ENCODE measurements at regions of chr9 and their contacts with region 1.

Region 1: GRCh38 chr9:132575005-132575609 is 7.3 kb upstream of the BARHL1 start:
- DNase-seq: peak in 3 of 4 donors; percentile 37 to 78 (median 60)
- ATAC-seq: peak; percentile 97
- H3K4me3 ChIP-seq: no peak overlapping the region
- H3K27ac ChIP-seq: no peak overlapping the region
- H3K4me1 ChIP-seq: no peaks in the 10 kb centered on the region
- H3K27me3 ChIP-seq: peaks cover 35 to 85% of the 10 kb centered on the region in 2 donors
- CTCF ChIP-seq: peak; percentile 49 to 54

Region 2: DNA sequence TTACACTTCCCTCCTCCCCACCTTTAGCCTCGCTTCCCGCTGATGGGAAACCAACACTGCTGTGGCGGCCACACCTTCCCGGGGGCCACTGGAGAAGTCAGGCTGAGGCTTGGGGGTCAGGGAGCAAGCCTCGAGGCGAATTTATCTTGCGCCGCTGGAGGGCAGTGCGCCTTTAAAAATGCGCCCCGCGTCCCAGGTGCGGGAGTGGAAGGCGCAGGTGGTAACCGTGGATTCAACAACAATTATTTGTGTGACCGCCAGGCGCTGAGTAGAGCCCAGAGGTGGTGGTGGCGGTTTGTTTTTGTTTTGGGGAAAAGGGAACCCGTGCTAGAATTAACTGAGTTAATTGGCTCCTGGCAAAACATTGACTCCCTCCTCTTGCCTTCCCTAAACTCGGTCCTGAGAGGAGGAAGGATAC is 164.0 kb before region 1 on chr9:
- intact Hi-C with region 1: loop called in 1 of 2 experiments (anchors 10 kb)
- DNase-seq: peak in 2 of 4 donors; percentile 42 to 81
- ATAC-seq: peak; percentile 72
- H3K4me3 ChIP-seq: peak overlapping the region in 1 of 2 donors; percentile 41
- H3K27ac ChIP-seq: no peak overlapping the region
- H3K4me1 ChIP-seq: peaks cover 10 to 28% of the 10 kb centered on the region in 2 donors
- H3K27me3 ChIP-seq: peaks cover 40 to 75% of the 10 kb centered on the region in 2 donors
- CTCF ChIP-seq: peak; percentile 39 to 41

Region 3: GRCh38 chr9:132509928-132510874 is 64.9 kb before region 1 on chr9:
- intact Hi-C with region 1: loop called in 1 of 2 experiments (anchors 5 kb)
- DNase-seq: no peak
- ATAC-seq: no peak
- H3K4me3 ChIP-seq: no peak overlapping the region
- H3K27ac ChIP-seq: no peak overlapping the region
- H3K4me1 ChIP-seq: peaks cover 0 to 15% of the 10 kb centered on the region in 2 donors
- H3K27me3 ChIP-seq: peaks cover 0 to 85% of the 10 kb centered on the region in 2 donors
- CTCF ChIP-seq: no peak

Region 4: DNA sequence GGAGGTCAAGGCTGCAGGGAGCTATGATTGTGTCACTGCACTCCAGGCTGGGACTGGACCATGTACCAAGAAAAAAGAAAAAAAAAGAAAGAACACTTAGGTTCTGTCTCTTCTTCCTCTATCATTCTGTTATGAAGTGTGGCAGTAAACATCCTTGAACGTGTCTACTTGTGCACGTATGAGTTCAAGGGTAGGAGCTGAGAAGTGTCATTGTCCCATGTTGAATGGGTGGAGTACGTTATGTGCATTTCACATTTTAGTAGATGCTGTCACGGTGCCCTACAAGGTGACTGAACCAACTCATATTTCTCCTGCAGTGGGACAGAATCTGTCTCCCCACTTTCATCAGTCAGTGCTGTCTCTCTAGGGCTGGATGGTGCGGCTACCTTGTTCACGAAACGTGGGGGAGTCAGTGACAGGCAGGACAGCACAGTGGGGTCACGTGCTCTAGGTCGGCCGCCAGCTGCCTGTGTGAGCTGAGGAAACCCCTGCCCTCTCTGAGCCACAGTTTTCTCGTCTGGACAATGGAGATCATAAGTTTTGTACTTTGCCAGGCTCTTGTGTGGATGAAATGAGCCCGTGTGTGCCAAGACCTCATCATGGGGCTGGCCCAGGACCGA is 142.3 kb after region 1 on chr9:
- intact Hi-C with region 1: no loop called
- DNase-seq: no peak
- ATAC-seq: peak; percentile 57
- H3K4me3 ChIP-seq: no peak overlapping the region
- H3K27ac ChIP-seq: no peak overlapping the region
- H3K4me1 ChIP-seq: no peaks in the 10 kb centered on the region
- H3K27me3 ChIP-seq: peaks cover 0 to 41% of the 10 kb centered on the region in 2 donors
- CTCF ChIP-seq: no peak

Measured in left lung (tissue), 14 donors.